CD8-positive, alpha-beta memory T cell (primary cell): ENCODE measurements at regions of chr11 and their contacts with region 1.

Region 1: GRCh38 chr11:34357701-34358257 is at the start of gene ABTB2:
- DNase-seq: peak; percentile 95 to 97 (median 95)
- H3K4me3 ChIP-seq: peak within 1 kb of the TSS; percentile 83
- H3K4me3 Mint-ChIP-seq: peak within 1 kb of the TSS; percentile 82 to 95 (median 90)
- H3K27ac ChIP-seq: peak within 1 kb of the TSS; percentile 38
- H3K27ac Mint-ChIP-seq: peak within 1 kb of the TSS; percentile 5 to 90 (median 82)
- H3K4me1 ChIP-seq: peaks cover 8% of the 10 kb centered on the region
- H3K4me1 Mint-ChIP-seq: peaks cover 13 to 26% (median 23%) of the 10 kb centered on the region in 3 donors
- H3K27me3 ChIP-seq: peaks cover 16% of the 10 kb centered on the region
- H3K27me3 Mint-ChIP-seq: peaks cover 25 to 59% of the 10 kb centered on the region in 2 donors
- total RNA-seq, gene ABTB2: 5.4 to 5.5 TPM

Region 2: DNA sequence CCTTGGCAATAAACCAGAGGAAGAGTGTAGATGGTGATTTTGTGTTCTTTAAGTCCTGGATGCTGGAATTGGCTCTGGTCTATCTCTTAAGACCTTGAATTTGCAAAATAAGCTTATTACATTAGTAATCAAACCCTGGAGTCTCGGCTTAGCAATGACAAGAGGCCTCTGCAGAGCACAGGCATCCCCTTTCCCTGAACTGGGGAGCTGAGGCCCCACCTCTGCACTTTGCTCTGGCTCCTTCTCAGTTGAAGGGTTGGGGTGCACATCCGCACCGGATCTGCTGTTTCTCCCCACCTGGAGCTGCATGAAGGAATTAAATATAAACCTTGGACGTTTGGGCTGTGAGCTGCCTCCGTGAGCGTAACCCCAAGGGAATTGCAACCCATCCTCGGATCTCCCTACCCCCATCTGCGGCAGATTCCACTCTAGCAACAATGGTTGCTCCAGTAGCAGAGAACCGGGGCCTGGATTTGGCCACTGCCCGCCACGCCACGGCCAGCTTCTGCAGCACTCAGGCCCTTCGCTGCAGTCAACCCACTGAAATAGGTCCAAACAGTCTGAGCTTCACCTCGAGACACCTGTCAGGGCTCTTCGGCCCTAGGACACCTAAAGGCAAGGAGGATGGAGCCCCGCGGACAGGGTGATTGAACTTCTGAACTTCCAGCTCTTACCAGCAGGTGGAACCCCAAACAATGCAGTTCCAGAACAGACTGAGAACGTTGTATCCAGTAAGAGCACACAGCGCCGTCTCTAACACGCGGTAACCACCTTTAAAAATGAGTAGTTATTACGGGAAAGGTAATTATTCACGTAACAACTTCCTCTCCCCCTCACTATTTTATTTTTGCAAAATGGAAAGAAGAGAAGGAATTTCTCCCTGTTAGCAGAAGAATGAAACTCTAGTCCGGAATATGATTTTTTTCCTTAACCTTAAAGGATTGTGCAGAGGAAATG is 361.0 kb before region 1 on chr11:
- CTCF ChIA-PET with region 1: interaction called, 16 read pairs
- POLR2A ChIA-PET with region 1: interaction called, 4 read pairs
- DNase-seq: peak; percentile 43 to 79 (median 67)
- H3K4me3 ChIP-seq: no peak overlapping the region
- H3K4me3 Mint-ChIP-seq: peak overlapping the region in 3 of 7 donors; percentile 1 to 59 (median 40)
- H3K27ac ChIP-seq: no peak overlapping the region
- H3K27ac Mint-ChIP-seq: peak overlapping the region in 1 of 8 donors; percentile 22
- H3K4me1 ChIP-seq: peaks cover 4% of the 10 kb centered on the region
- H3K4me1 Mint-ChIP-seq: peaks cover 4 to 10% (median 8%) of the 10 kb centered on the region in 3 donors
- H3K27me3 ChIP-seq: peaks cover 7% of the 10 kb centered on the region
- H3K27me3 Mint-ChIP-seq: peaks cover 17 to 30% of the 10 kb centered on the region in 2 donors

Region 3: GRCh38 chr11:34091825-34092224 is 266.0 kb before region 1 on chr11:
- CTCF ChIA-PET with region 1: no interaction called
- POLR2A ChIA-PET with region 1: no interaction called
- DNase-seq: no peak
- H3K4me3 ChIP-seq: no peak overlapping the region
- H3K4me3 Mint-ChIP-seq: no peak overlapping the region
- H3K27ac ChIP-seq: no peak overlapping the region
- H3K27ac Mint-ChIP-seq: peak overlapping the region in 1 of 8 donors; percentile 47
- H3K4me1 ChIP-seq: peaks cover 3% of the 10 kb centered on the region
- H3K4me1 Mint-ChIP-seq: peaks cover 2 to 6% (median 3%) of the 10 kb centered on the region in 3 donors
- H3K27me3 ChIP-seq: no peaks in the 10 kb centered on the region
- H3K27me3 Mint-ChIP-seq: no peaks in the 10 kb centered on the region

Region 4: GRCh38 chr11:34345991-34346480 is 11.7 kb before region 1 on chr11:
- CTCF ChIA-PET with region 1: interaction called, 17 read pairs
- POLR2A ChIA-PET with region 1: no interaction called
- DNase-seq: no peak
- H3K4me3 ChIP-seq: no peak overlapping the region
- H3K4me3 Mint-ChIP-seq: no peak overlapping the region
- H3K27ac ChIP-seq: no peak overlapping the region
- H3K27ac Mint-ChIP-seq: no peak overlapping the region
- H3K4me1 ChIP-seq: no peaks in the 10 kb centered on the region
- H3K4me1 Mint-ChIP-seq: no peaks in the 10 kb centered on the region
- H3K27me3 ChIP-seq: peaks cover 5% of the 10 kb centered on the region
- H3K27me3 Mint-ChIP-seq: peaks cover 8 to 10% of the 10 kb centered on the region in 2 donors

Region 5: GRCh38 chr11:34373727-34374126 is 15.9 kb after region 1 on chr11:
- CTCF ChIA-PET with region 1: no interaction called
- POLR2A ChIA-PET with region 1: no interaction called
- DNase-seq: no peak
- H3K4me3 ChIP-seq: no peak overlapping the region
- H3K4me3 Mint-ChIP-seq: no peak overlapping the region
- H3K27ac ChIP-seq: no peak overlapping the region
- H3K27ac Mint-ChIP-seq: no peak overlapping the region
- H3K4me1 ChIP-seq: no peaks in the 10 kb centered on the region
- H3K4me1 Mint-ChIP-seq: no peaks in the 10 kb centered on the region
- H3K27me3 ChIP-seq: no peaks in the 10 kb centered on the region
- H3K27me3 Mint-ChIP-seq: peaks cover 4 to 11% of the 10 kb centered on the region in 2 donors